ENCODE measurements at regions of chr15 and their contacts with region 1.

Region 1: DNA sequence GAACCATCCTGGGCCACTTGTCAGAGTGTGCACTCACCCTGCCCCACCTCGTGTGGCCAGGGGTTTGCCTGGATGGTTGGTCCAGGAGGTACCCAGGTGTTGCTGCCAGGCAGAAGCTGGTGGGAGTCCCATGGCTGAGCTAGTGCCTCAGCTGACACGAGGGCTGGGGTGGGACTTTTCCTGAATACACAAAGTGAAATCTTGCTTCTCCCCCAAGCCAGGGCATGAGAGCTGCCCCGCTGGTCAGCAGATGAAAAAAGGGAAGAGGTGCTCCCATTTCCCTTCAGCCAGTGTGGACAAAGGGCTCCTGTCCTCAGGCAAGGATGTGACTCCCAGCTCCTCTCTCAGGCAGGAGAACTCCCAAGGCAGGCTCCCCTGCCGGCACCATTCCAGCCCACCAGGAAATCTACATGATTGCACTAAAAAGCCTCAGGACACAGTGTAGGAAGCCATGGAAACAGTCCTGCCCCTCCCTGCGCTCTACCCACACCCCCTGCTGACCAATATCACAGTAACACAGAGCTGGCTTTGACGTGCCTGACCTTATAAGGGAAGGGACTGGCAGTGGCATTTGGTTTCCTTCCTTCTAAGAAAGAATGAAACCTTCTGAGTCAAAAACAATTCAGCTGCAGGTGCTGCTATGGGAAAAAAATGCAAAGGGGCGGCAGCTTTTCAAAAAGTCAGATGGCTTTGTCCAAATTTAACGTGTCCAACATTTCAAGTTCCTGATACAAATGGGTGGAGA is 33.9 kb downstream of the MYO5C start:
- DNase-seq: peak; percentile 95
- H3K4me3 ChIP-seq: no peak overlapping the region
- H3K27ac ChIP-seq: peak overlapping the region; percentile 55
- H3K4me1 ChIP-seq: peaks cover 17% of the 10 kb centered on the region
- H3K27me3 ChIP-seq: no peaks in the 10 kb centered on the region
- CTCF ChIP-seq: peak in 1 of 2 donors; percentile 32
- POLR2A ChIP-seq: peak; percentile 34

Region 2: GRCh38 chr15:52295421-52296001 is 33.8 kb after region 1 on chr15 and contains the start of gene MYO5C:
- CTCF ChIA-PET with region 1: interaction called, 6 read pairs
- POLR2A ChIA-PET with region 1: interaction called, 14 read pairs
- dilution Hi-C with region 1: no loop called
- intact Hi-C with region 1: loop called (anchors 1 kb)
- DNase-seq: peak; percentile 95
- H3K4me3 ChIP-seq: peak within 1 kb of the TSS; percentile 32 to 72 (median 57)
- H3K27ac ChIP-seq: no peak within 1 kb of the TSS
- H3K4me1 ChIP-seq: peaks cover 8% of the 10 kb centered on the region
- H3K27me3 ChIP-seq: peaks cover 0 to 3% of the 10 kb centered on the region in 2 experiments
- CTCF ChIP-seq: no peak
- POLR2A ChIP-seq: no peak
- total RNA-seq, gene MYO5C: 18.4 and 19.4 TPM in 2 replicates

Region 3: DNA sequence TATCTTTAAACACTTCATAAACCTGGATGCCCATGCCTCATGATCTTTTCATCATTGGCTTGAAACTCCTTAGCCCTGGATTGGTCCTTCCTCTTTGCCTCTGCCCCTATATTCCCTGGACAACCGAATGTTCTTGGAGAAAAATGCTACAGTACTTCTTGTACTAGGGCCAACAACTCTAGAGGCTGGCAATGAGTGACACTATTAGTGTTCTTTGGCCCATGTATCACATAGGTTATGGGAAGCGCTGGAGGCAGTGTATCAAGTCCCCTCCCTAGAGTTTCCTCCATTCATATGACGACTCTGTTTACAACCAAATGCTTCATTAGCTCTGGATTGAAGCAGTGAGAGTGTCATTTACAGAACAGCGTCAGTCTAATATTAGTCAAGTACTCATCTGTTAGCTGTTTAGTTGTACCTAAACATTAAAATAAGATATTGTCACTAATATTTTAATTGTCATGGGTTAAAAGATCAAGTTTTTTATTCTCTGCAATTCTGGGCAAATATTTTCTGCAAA is 100.4 kb after region 1 on chr15:
- CTCF ChIA-PET with region 1: no interaction called
- POLR2A ChIA-PET with region 1: no interaction called
- dilution Hi-C with region 1: no loop called
- intact Hi-C with region 1: no loop called
- DNase-seq: no peak
- H3K4me3 ChIP-seq: no peak overlapping the region
- H3K27ac ChIP-seq: no peak overlapping the region
- H3K4me1 ChIP-seq: no peaks in the 10 kb centered on the region
- H3K27me3 ChIP-seq: no peaks in the 10 kb centered on the region
- CTCF ChIP-seq: no peak
- POLR2A ChIP-seq: no peak